T-cell (primary cell): ENCODE measurements at regions of chr16 and their contacts with region 1.

Region 1: DNA sequence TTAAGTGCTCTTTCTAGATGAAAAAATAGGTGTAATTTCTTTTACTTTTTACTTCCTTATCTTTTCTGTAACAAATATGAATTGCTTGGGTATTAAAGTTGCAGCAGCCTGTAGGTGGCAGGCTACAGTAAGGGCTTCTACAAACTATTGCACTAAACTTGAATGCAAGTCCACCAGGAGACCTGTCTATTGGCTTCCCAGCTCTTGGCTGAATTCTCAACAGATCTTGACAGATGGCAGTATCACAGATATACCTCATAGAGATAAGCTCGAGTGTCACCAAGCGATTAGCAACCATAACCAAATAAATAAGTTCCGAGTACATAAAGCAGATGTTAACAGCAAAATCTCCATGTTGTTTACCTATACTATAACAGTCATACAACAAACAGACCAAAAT is 5.9 kb downstream of the BBS2 start:
- DNase-seq: peak in 33 of 35 experiments; percentile 8 to 71 (median 46)
- ATAC-seq: peak; percentile 74 to 91 (median 86)
- H3K4me3 ChIP-seq: no peak overlapping the region
- H3K4me3 Mint-ChIP-seq: no peak overlapping the region
- H3K27ac ChIP-seq: no peak overlapping the region
- H3K27ac Mint-ChIP-seq: peak overlapping the region in 1 of 2 donors; percentile 12
- H3K4me1 ChIP-seq: peaks cover 0 to 12% of the 10 kb centered on the region in 2 experiments
- H3K4me1 Mint-ChIP-seq: peaks cover 53 to 63% (median 60%) of the 10 kb centered on the region in 3 donors
- H3K27me3 ChIP-seq: no peaks in the 10 kb centered on the region
- H3K27me3 Mint-ChIP-seq: no peaks in the 10 kb centered on the region

Region 2: DNA sequence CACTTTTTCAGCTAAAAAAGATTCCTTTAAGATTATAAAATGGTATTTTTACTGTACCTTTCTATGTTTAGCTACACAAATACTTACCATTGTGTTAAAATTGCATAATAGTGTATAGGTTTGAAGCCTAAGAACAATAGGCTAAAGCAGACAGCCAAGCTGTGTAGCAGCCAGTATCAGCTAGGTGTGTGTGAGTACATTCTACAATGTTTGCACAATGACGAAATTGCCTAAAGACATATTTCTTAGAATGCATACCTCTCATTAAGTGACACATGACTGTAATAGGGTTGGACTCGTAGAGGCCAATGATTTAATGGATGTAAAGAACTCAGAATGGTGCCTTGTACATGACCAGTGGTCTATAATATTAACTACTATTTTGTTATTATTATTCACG is 135.8 kb after region 1 on chr16:
- CTCF ChIA-PET with region 1: no interaction called
- POLR2A ChIA-PET with region 1: no interaction called
- DNase-seq: no peak
- ATAC-seq: no peak
- H3K4me3 ChIP-seq: no peak overlapping the region
- H3K4me3 Mint-ChIP-seq: no peak overlapping the region
- H3K27ac ChIP-seq: no peak overlapping the region
- H3K27ac Mint-ChIP-seq: no peak overlapping the region
- H3K4me1 ChIP-seq: no peaks in the 10 kb centered on the region
- H3K4me1 Mint-ChIP-seq: no peaks in the 10 kb centered on the region
- H3K27me3 ChIP-seq: peaks cover 33 to 50% of the 10 kb centered on the region in 2 experiments
- H3K27me3 Mint-ChIP-seq: peaks cover 17 to 27% of the 10 kb centered on the region in 2 donors

Region 3: GRCh38 chr16:56742030-56742984 is 228.3 kb after region 1 on chr16:
- CTCF ChIA-PET with region 1: no interaction called
- POLR2A ChIA-PET with region 1: interaction called in 1 of 2 experiments, 10 read pairs
- DNase-seq: no peak
- ATAC-seq: no peak
- H3K4me3 ChIP-seq: no peak overlapping the region
- H3K4me3 Mint-ChIP-seq: no peak overlapping the region
- H3K27ac ChIP-seq: no peak overlapping the region
- H3K27ac Mint-ChIP-seq: no peak overlapping the region
- H3K4me1 ChIP-seq: no peaks in the 10 kb centered on the region
- H3K4me1 Mint-ChIP-seq: peaks cover 29 to 37% (median 30%) of the 10 kb centered on the region in 3 donors
- H3K27me3 ChIP-seq: no peaks in the 10 kb centered on the region
- H3K27me3 Mint-ChIP-seq: no peaks in the 10 kb centered on the region

Region 4: GRCh38 chr16:56851671-56852400 is 337.9 kb after region 1 on chr16:
- CTCF ChIA-PET with region 1: interaction called in 1 of 2 experiments, 12 read pairs
- POLR2A ChIA-PET with region 1: no interaction called
- DNase-seq: no peak
- ATAC-seq: no peak
- H3K4me3 ChIP-seq: no peak overlapping the region
- H3K4me3 Mint-ChIP-seq: no peak overlapping the region
- H3K27ac ChIP-seq: no peak overlapping the region
- H3K27ac Mint-ChIP-seq: no peak overlapping the region
- H3K4me1 ChIP-seq: peaks cover 2 to 9% of the 10 kb centered on the region in 2 experiments
- H3K4me1 Mint-ChIP-seq: peaks cover 17 to 30% (median 25%) of the 10 kb centered on the region in 3 donors
- H3K27me3 ChIP-seq: no peaks in the 10 kb centered on the region
- H3K27me3 Mint-ChIP-seq: no peaks in the 10 kb centered on the region

Region 5: GRCh38 chr16:57648590-57649442 is 1134.8 kb after region 1 on chr16:
- CTCF ChIA-PET with region 1: no interaction called
- POLR2A ChIA-PET with region 1: no interaction called
- DNase-seq: peak; percentile 46 to 89 (median 79)
- ATAC-seq: peak; percentile 74 to 87 (median 84)
- H3K4me3 ChIP-seq: peak overlapping the region in 1 of 2 donors; percentile 32
- H3K4me3 Mint-ChIP-seq: peak overlapping the region; percentile 23 to 51 (median 25)
- H3K27ac ChIP-seq: peak overlapping the region; percentile 32
- H3K27ac Mint-ChIP-seq: peak overlapping the region; percentile 16 to 63
- H3K4me1 ChIP-seq: peaks cover 0 to 90% of the 10 kb centered on the region in 2 experiments
- H3K4me1 Mint-ChIP-seq: peaks cover 30 to 38% (median 30%) of the 10 kb centered on the region in 3 donors
- H3K27me3 ChIP-seq: peaks cover 0 to 2% of the 10 kb centered on the region in 2 experiments
- H3K27me3 Mint-ChIP-seq: no peaks in the 10 kb centered on the region